GM18951 (cell line): ENCODE measurements at regions of chr5 and their contacts with region 1.

Region 1: GRCh38 chr5:71757590-71758543 is 38.8 kb downstream of the CARTPT start:
- POLR2A ChIP-seq: no peak

Region 2: DNA sequence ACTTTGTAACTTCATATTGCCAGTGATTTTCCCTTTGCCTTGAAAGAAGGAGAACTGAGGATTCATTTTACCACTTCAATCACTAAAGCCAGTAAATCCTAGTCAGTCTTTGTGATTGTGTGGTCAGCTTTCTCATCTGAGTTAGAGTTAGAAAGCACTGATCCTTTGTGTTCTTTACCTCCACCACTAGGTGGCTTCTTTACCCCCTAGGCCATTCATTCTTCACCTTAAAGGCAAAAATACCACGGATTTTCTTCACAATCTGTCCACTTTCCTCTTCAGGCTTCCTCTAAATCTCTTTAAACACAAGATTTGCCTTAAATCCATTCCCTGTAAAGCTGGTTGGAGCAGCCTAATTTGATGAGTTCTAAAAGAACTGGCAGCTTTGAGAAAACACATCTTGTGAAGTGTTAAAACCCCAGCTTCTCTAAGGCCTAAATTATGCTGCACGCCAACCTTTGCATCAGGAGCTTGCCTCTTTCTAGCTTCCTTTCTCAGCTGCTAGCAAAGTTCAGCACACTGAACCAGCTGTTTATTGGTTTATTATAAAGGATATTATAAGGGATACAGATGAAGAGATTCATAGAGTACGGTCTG is 282.0 kb before region 1 on chr5:
- in situ Hi-C with region 1: loop called (anchors 25 kb)
- POLR2A ChIP-seq: no peak

Region 3: GRCh38 chr5:72063219-72063819 is 305.5 kb after region 1 on chr5:
- in situ Hi-C with region 1: no loop called
- POLR2A ChIP-seq: no peak

Region 4: GRCh38 chr5:72895758-72896157 is 1137.9 kb after region 1 on chr5:
- in situ Hi-C with region 1: no loop called
- POLR2A ChIP-seq: no peak